Psoas muscle (tissue), 8 donors: ENCODE measurements at regions of chr6 and their contacts with region 1.

Region 1: DNA sequence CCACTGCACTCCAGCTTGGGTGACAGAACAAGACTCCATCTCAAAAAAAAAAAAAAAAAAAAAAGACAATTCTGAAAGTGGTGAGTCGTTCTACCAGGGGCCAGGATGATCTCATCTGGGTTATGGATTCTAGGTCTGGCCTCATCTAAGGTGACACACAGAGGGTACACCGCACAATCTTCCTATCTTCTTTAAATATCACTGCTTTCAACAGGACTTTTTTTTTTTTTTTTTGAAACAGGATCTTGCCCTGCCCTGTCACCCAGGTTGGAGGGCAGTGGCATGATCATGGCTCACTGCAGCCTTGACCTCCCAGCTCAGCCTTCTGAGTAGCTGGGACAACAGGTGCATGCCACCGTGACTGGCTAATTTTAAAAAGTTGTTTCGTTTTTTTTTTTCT is 67.7 kb downstream of the SLC16A10 start:
- DNase-seq: no peak
- ATAC-seq: peak; percentile 59 to 87 (median 82)
- H3K4me3 ChIP-seq: no peak overlapping the region
- H3K27ac ChIP-seq: no peak overlapping the region
- H3K4me1 ChIP-seq: peaks cover 8% of the 10 kb centered on the region
- H3K27me3 ChIP-seq: no peaks in the 10 kb centered on the region
- CTCF ChIP-seq: no peak

Region 2: GRCh38 chr6:111101987-111102386 is 53.0 kb before region 1 on chr6:
- intact Hi-C with region 1: loop called in 1 of 2 experiments (anchors 2 kb)
- DNase-seq: no peak
- ATAC-seq: no peak
- H3K4me3 ChIP-seq: no peak overlapping the region
- H3K27ac ChIP-seq: no peak overlapping the region
- H3K4me1 ChIP-seq: peaks cover 23% of the 10 kb centered on the region
- H3K27me3 ChIP-seq: no peaks in the 10 kb centered on the region
- CTCF ChIP-seq: no peak